Dendritic cell treated with granulocyte-macrophage colony-stimulating factor and Interleukin-4, amounts not matched to agents 40 ng/mL and 50 ng/mL, for 4 days (primary cell): ENCODE measurements at regions of chr16 and their contacts with region 1.

Region 1: DNA sequence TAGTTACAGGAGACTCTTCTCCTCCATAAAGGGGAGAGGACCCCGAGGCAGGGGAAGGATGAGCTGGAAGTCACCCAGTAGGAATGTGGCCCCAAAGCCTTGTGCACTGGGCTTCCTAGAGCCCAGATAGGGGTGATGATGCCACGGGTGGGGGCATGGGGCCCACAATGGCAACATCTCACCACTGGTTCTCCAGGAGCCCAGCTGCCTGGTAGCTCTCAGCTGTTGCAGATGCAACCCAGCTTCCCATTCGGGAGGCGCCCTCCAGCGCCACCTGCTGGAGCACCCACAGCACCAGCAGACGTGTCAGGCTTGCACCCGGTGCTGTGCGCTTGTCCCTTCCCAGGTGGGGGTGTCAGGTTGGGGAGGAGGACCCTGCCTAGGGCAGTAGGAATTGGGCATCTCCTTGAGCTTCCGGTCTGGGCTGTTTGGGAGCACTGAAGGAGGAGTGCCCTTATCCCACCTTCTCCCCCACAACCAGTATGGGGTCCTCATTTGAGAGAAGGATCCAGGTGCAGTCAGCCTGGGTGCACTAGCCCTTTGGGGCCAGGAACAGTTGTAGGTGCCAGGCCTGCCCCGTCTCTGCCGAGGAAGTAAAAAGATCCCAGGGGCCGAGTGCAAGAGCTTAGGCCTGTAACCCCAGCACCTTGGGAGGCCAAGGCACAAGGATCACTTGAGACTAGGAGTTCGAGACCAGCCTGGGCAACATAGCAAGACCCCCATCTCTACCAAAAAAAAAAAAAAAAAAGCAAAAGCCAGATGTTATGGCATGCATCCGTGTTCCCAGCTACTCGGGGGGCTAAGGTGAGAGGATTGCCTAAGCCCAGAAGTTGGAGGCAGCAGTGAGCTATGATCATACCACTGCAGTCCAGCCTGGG is 14.4 kb downstream of the CDIPT start:
- H3K4me3 Mint-ChIP-seq: no peak overlapping the region
- H3K27ac Mint-ChIP-seq: no peak overlapping the region
- H3K4me1 Mint-ChIP-seq: peaks cover 14% of the 10 kb centered on the region
- H3K27me3 Mint-ChIP-seq: no peaks in the 10 kb centered on the region

Region 2: GRCh38 chr16:29694384-29695195 is 154.1 kb before region 1 on chr16:
- intact Hi-C with region 1: loop called (anchors 2 kb)
- H3K4me3 Mint-ChIP-seq: no peak overlapping the region
- H3K27ac Mint-ChIP-seq: no peak overlapping the region
- H3K4me1 Mint-ChIP-seq: peaks cover 40% of the 10 kb centered on the region
- H3K27me3 Mint-ChIP-seq: peaks cover 6% of the 10 kb centered on the region

Region 3: GRCh38 chr16:29891525-29892457 is 43.1 kb after region 1 on chr16:
- intact Hi-C with region 1: no loop called
- H3K4me3 Mint-ChIP-seq: no peak overlapping the region
- H3K27ac Mint-ChIP-seq: no peak overlapping the region
- H3K4me1 Mint-ChIP-seq: peaks cover 11% of the 10 kb centered on the region
- H3K27me3 Mint-ChIP-seq: peaks cover 8% of the 10 kb centered on the region